A549 (cell line): ENCODE measurements at regions of chr18 and their contacts with region 1.

Region 1: DNA sequence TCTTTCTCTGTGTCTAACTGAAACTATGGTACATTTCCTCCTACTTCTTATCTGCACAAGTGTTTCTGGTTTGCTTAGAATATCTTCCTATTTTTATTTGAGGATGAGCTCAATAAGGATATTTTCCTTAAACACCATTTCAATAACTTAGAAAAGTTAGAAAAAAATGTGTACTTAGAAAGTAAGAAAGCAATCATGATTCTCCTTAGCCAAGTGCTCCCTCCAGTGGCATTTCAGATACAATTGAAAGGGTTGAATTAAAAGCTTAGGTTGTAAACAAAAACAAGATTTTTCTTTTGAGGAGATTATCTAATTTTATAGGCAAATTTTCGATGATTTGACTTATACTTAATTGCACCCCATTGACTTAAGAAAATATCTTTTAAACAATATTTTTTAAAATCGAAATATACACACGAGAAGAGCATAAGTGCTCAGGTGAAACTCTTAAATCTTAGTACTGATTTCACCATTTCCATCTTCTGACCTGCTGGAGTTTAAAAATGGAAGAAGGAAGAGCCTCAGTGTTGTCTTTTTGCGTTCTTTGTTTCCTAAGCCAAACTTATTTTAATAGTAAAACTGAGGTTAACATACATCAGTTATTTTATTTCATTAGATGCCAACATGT is 26.9 kb downstream of the C18orf63 start:
- DNase-seq: peak in 1 of 2 experiments; percentile 69
- ATAC-seq: no peak
- H3K4me3 ChIP-seq: no peak overlapping the region
- H3K27ac ChIP-seq: 0 out of 6 replicates have a peak overlapping the region, but pooled peaks of 1 of the 2 experiments have one; percentile 41
- H3K4me1 ChIP-seq: 0 out of 3 replicates have a peak, but pooled peaks cover 3% of the 10 kb centered on the region
- CTCF ChIP-seq: peak; percentile 84
- EP300 ChIP-seq: no peak
- POLR2A ChIP-seq: no peak
- RAD21 ChIP-seq: peak; percentile 87 to 91

Region 2: DNA sequence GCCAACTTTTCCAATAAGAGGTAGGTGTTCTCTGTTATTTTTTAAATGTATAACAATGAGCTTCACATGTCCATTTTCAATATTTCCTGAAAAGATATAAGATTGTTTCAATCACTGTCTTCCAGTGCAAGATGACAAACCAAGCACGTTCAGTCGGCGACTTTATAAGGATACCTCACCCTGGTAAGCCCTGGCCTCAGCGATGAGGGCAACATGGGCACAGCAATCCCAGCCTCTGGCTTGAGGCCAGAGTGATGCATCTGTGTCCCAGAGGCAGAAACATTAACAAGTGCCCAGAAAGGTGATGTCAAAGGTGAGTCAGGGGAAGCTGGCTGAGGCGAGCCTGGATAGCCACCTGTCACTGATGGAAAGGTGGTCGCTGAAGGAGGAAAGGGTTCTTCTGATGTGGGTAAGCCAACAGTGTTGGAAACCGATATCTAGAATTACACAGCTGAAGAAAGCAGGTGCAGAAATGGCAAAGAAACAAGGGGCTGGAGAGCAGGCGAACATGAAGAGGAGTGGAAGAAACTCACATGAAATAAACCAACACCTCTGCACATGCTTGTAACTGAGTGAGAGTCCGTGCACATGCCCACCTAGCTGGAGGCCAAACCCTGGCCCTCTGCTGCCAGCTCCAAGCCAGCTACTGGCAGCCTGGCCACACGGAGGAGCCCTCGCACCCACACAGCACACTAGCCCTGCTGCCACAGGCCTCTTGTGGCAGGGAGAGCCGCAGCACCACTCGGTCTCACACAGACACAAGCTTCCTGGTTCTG is 260.4 kb before region 1 on chr18:
- CTCF ChIA-PET with region 1: interaction called, 14 read pairs
- POLR2A ChIA-PET with region 1: no interaction called
- DNase-seq: peak; percentile 60 to 74
- ATAC-seq: peak; percentile 99 to 100
- H3K4me3 ChIP-seq: no peak overlapping the region
- H3K27ac ChIP-seq: peak overlapping the region in 1 of 2 experiments; percentile 52; a peak in 3 of 6 replicates
- H3K4me1 ChIP-seq: no peaks in the 10 kb centered on the region
- CTCF ChIP-seq: peak; percentile 39
- EP300 ChIP-seq: no peak
- POLR2A ChIP-seq: no peak
- RAD21 ChIP-seq: peak in 1 of 2 experiments; percentile 43; a peak in 2 of 5 replicates

Region 3: GRCh38 chr18:74190086-74190485 is 152.4 kb before region 1 on chr18:
- CTCF ChIA-PET with region 1: interaction called, 22 read pairs
- POLR2A ChIA-PET with region 1: no interaction called
- DNase-seq: no peak
- ATAC-seq: no peak
- H3K4me3 ChIP-seq: no peak overlapping the region
- H3K27ac ChIP-seq: no peak overlapping the region
- H3K4me1 ChIP-seq: no peaks in the 10 kb centered on the region
- CTCF ChIP-seq: no peak
- EP300 ChIP-seq: no peak
- POLR2A ChIP-seq: no peak
- RAD21 ChIP-seq: no peak

Region 4: DNA sequence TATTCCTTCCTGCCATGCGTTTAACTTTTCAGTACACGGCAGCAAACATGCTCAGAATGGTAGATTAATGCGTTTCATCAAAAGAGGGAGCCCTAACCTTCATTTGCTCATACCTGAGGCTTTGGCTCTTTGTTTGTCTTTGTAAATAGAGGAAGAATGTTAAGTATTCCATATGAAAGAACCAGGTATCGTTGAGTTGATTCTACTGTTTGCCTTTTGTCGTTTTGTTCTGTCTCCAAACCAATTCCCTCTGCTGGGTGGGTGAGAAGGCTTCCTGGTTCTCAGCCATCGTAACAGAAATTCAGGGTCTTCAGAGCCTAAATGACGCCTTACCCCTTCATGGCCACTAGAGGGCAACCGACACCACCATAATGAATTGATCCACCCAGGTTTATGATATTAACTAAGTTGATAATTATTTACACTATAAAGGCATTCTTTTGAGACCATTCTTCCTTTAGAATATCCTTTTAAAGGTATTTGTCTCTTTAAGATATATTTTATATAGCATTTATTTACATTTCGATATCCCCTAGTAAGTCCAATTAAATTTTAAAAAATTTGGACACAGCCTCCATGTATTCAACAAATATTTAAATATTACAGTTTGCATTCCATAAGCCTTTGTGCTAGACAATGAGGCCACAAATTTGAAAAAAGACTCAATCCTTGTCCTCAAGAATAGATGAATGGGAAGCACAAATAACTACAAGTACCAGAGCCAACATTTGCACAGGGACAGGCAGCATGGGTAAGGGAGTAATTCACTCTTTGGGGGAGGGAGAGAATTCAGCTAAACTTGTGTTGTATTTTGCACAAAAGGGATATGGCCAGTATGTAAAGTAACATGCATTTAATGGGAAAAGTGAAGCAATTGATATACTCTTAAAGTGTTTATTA is 146.1 kb before region 1 on chr18:
- CTCF ChIA-PET with region 1: interaction called, 62 read pairs
- POLR2A ChIA-PET with region 1: no interaction called
- DNase-seq: peak; percentile 65 to 77
- ATAC-seq: peak; percentile 80 to 89
- H3K4me3 ChIP-seq: peak overlapping the region; percentile 33; the same call in 2 of the 3 replicates
- H3K27ac ChIP-seq: peak overlapping the region; percentile 71 to 84
- H3K4me1 ChIP-seq: peaks cover 10% of the 10 kb centered on the region
- CTCF ChIP-seq: peak; percentile 93
- EP300 ChIP-seq: no peak
- POLR2A ChIP-seq: no peak
- RAD21 ChIP-seq: peak; percentile 79 to 94

Region 5: GRCh38 chr18:74204526-74205152 is 137.9 kb before region 1 on chr18:
- CTCF ChIA-PET with region 1: interaction called, 62 read pairs
- POLR2A ChIA-PET with region 1: no interaction called
- DNase-seq: no peak
- ATAC-seq: peak in 1 of 2 experiments; percentile 75; a peak in 2 of 6 replicates
- H3K4me3 ChIP-seq: no peak overlapping the region
- H3K27ac ChIP-seq: peak overlapping the region in 1 of 2 experiments; percentile 50; a peak in 1 of 6 replicates
- H3K4me1 ChIP-seq: 0 out of 3 replicates have a peak, but pooled peaks cover 4% of the 10 kb centered on the region
- CTCF ChIP-seq: no peak
- EP300 ChIP-seq: no peak
- POLR2A ChIP-seq: no peak
- RAD21 ChIP-seq: no peak

Region 6: GRCh38 chr18:74281639-74282358 is 60.7 kb before region 1 on chr18:
- CTCF ChIA-PET with region 1: no interaction called
- POLR2A ChIA-PET with region 1: no interaction called
- DNase-seq: no peak
- ATAC-seq: peak in 1 of 2 experiments; percentile 13; a peak in 1 of 6 replicates
- H3K4me3 ChIP-seq: no peak overlapping the region
- H3K27ac ChIP-seq: peak overlapping the region; percentile 58 to 64; a peak in 5 of 6 replicates
- H3K4me1 ChIP-seq: peaks cover 44% of the 10 kb centered on the region
- CTCF ChIP-seq: no peak
- EP300 ChIP-seq: no peak
- POLR2A ChIP-seq: no peak
- RAD21 ChIP-seq: no peak

Region 7: DNA sequence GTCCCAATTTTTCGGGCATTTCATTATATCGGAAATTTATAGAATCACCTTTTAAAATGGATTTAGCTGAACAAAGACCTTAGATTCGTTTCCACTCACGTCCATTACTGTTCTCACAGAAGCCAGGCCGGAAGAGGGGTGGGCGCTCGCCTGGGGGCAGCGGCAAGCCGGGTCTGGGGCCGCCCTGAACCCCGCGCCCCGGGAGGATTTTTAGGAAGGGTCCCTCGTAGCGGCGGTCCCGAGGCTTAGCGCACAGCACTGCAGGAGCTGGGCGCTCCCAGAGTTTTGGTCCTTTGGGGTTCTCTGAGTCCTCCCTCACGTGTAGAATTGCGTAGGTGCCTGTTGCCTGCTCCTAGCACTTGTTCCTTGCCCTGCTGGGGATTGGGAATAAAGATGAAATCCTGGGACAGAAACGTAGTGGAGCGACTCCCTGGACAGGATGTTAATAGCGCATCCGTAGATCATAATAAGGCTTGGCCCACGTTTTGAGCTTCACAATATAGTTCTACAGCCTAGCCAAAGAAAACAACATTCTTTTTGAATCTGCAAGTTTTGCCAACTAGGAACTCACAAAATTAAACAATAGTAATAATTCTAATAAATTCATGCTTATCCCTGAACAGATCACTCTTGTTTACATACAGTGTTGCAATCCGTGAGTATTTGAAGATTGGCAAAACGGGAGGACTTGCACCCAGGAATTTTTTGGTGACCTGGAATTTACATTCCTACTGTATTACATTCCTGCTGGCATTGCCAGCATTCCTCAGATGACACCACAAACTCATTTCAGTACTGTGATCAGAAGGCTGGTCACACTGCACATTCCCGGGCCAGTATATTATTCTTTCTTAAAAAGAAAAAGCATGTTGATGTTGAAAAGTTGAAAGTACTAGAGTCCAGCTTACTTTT is 26.0 kb before region 1 on chr18:
- CTCF ChIA-PET with region 1: interaction called, 18 read pairs
- POLR2A ChIA-PET with region 1: no interaction called
- DNase-seq: peak; percentile 5 to 42
- ATAC-seq: peak; percentile 78 to 89
- H3K4me3 ChIP-seq: no peak overlapping the region
- H3K27ac ChIP-seq: peak overlapping the region; percentile 70 to 84
- H3K4me1 ChIP-seq: peaks cover 22% of the 10 kb centered on the region
- CTCF ChIP-seq: no peak
- EP300 ChIP-seq: peak; percentile 29 to 69; a peak in 2 of 5 replicates
- POLR2A ChIP-seq: no peak
- RAD21 ChIP-seq: no peak

Region 8: DNA sequence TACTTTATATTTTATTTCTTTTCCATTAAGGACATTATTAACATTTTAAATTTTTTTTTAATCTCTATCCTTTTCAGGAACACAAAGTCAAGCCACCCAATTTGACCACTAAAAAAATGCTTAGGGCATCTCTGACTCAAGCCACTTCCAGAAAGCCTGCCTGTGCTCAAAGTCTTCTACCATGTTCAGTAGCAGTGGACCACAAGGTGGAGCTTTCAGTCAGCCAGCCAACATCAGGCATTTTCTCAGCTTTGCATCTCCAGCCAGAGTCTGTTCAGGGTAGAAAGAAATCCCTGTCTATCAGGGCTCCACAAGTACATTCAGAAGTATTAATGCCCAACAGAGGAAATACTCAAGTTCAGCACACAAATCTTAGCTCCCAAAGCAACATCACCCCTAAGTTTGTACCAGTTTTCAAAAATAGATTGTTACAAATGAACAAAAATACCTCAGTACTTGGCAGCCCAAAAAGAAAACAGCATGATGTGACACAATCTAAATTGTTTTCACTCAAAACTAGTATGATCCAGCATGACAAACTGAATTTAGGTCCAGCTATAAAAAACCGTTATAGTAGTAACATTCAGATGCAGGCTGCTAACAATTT is 10.7 kb after region 1 on chr18:
- CTCF ChIA-PET with region 1: interaction called, 11 read pairs
- POLR2A ChIA-PET with region 1: no interaction called
- DNase-seq: peak; percentile 26 to 61
- ATAC-seq: peak; percentile 86 to 89
- H3K4me3 ChIP-seq: no peak overlapping the region
- H3K27ac ChIP-seq: no peak overlapping the region
- H3K4me1 ChIP-seq: no peaks in the 10 kb centered on the region
- CTCF ChIP-seq: peak; percentile 67
- EP300 ChIP-seq: no peak
- POLR2A ChIP-seq: no peak
- RAD21 ChIP-seq: peak; percentile 65 to 66

Region 9: GRCh38 chr18:74375999-74376398 is 33.5 kb after region 1 on chr18:
- CTCF ChIA-PET with region 1: no interaction called
- POLR2A ChIA-PET with region 1: no interaction called
- DNase-seq: peak; percentile 16 to 28
- ATAC-seq: peak; percentile 59 to 77; a peak in 5 of 6 replicates
- H3K4me3 ChIP-seq: no peak overlapping the region
- H3K27ac ChIP-seq: no peak overlapping the region
- H3K4me1 ChIP-seq: no peaks in the 10 kb centered on the region
- CTCF ChIP-seq: no peak
- EP300 ChIP-seq: no peak
- POLR2A ChIP-seq: no peak
- RAD21 ChIP-seq: no peak

Region 10: GRCh38 chr18:74524097-74524496 is 181.6 kb after region 1 on chr18:
- CTCF ChIA-PET with region 1: no interaction called
- POLR2A ChIA-PET with region 1: no interaction called
- DNase-seq: no peak
- ATAC-seq: no peak
- H3K4me3 ChIP-seq: no peak overlapping the region
- H3K27ac ChIP-seq: no peak overlapping the region
- H3K4me1 ChIP-seq: no peaks in the 10 kb centered on the region
- CTCF ChIP-seq: no peak
- EP300 ChIP-seq: no peak
- POLR2A ChIP-seq: no peak
- RAD21 ChIP-seq: no peak

Region 11: GRCh38 chr18:74597662-74598349 is 255.3 kb after region 1 on chr18 and contains the start of gene ZNF407:
- CTCF ChIA-PET with region 1: no interaction called
- POLR2A ChIA-PET with region 1: no interaction called
- DNase-seq: peak; percentile 57 to 92
- ATAC-seq: peak; percentile 90 to 93
- H3K4me3 ChIP-seq: peak within 1 kb of the TSS; percentile 76
- H3K27ac ChIP-seq: peak within 1 kb of the TSS; percentile 96 to 100
- H3K4me1 ChIP-seq: peaks cover 5% of the 10 kb centered on the region; the same call in 1 of the 3 replicates
- CTCF ChIP-seq: no peak
- EP300 ChIP-seq: no peak
- POLR2A ChIP-seq: no peak
- RAD21 ChIP-seq: no peak
- polyA plus RNA-seq, gene ZNF407: 3.0 and 3.3 TPM in 2 replicates